Gastrocnemius medialis (tissue), 4 donors: ENCODE measurements at regions of chr7 and their contacts with region 1.

Region 1: GRCh38 chr7:155598810-155599210 is 45.7 kb upstream of the RBM33 start:
- DNase-seq: peak; percentile 27 to 60
- ATAC-seq: peak; percentile 70 to 79
- H3K4me3 ChIP-seq: no peak overlapping the region
- H3K27ac ChIP-seq: no peak overlapping the region
- H3K4me1 ChIP-seq: no peaks in the 10 kb centered on the region
- H3K27me3 ChIP-seq: peaks cover 0 to 7% (median 0%) of the 10 kb centered on the region in 3 donors
- CTCF ChIP-seq: peak; percentile 82 to 96 (median 87)
- POLR2A ChIP-seq: no peak

Region 2: GRCh38 chr7:155644178-155644970 is 45.6 kb after region 1 on chr7 and contains the start of gene RBM33:
- in situ Hi-C with region 1: no loop called
- intact Hi-C with region 1: no loop called
- DNase-seq: peak; percentile 62 to 70
- ATAC-seq: peak; percentile 92
- H3K4me3 ChIP-seq: peak within 1 kb of the TSS; percentile 83 to 99 (median 90)
- H3K27ac ChIP-seq: peak within 1 kb of the TSS; percentile 93 to 98 (median 96)
- H3K4me1 ChIP-seq: peaks cover 29% of the 10 kb centered on the region in 2 donors
- H3K27me3 ChIP-seq: no peaks in the 10 kb centered on the region
- CTCF ChIP-seq: no peak
- POLR2A ChIP-seq: peak; percentile 48 to 55
- total RNA-seq, gene RBM33: 16.6 to 30.0 (median 28.1) TPM

Region 3: GRCh38 chr7:155738652-155739537 is 140.1 kb after region 1 on chr7:
- in situ Hi-C with region 1: no loop called
- intact Hi-C with region 1: loop called (anchors 1 kb)
- DNase-seq: peak; percentile 32 to 67
- ATAC-seq: peak; percentile 67 to 89
- H3K4me3 ChIP-seq: no peak overlapping the region
- H3K27ac ChIP-seq: no peak overlapping the region
- H3K4me1 ChIP-seq: peaks cover 7 to 11% of the 10 kb centered on the region in 2 donors
- H3K27me3 ChIP-seq: no peaks in the 10 kb centered on the region
- CTCF ChIP-seq: peak; percentile 35 to 63 (median 51)
- POLR2A ChIP-seq: no peak

Region 4: DNA sequence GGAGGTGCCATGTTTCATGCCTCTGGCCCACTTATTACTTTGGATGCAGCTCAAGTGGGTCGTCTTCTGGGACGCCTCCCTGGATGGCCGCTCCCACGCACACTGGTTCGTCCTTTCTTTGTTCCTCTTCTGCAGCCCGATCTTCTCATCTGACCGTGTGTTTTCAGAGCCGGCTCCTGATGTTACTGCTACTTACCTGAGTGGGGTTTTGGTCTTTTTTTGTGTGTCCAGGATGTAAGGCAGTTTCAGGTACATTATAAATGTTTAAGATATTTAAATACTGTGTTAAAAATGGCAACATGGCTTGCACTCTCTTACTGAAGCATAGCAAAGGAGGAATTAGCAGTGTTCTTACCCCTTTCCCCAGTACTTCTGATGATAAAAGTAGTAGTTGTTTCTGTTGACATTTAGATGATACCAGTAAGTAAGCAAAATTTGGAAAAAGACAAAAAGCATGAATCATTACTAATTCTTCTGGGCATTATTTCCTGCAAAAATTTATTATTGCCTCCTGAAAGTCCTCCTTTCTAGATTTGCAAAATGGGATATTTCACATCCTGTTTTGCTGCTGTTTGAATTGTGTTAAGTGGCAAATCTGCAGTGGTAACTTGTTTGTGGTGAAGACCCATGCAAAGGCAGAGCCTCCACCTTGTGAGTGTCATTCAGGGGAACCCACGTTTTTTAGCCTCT is 154.1 kb after region 1 on chr7:
- in situ Hi-C with region 1: loop called in 1 of 4 experiments (anchors 10 kb)
- intact Hi-C with region 1: no loop called
- DNase-seq: no peak
- ATAC-seq: no peak
- H3K4me3 ChIP-seq: no peak overlapping the region
- H3K27ac ChIP-seq: no peak overlapping the region
- H3K4me1 ChIP-seq: peaks cover 59 to 64% of the 10 kb centered on the region in 2 donors
- H3K27me3 ChIP-seq: no peaks in the 10 kb centered on the region
- CTCF ChIP-seq: no peak
- POLR2A ChIP-seq: no peak

Region 5: DNA sequence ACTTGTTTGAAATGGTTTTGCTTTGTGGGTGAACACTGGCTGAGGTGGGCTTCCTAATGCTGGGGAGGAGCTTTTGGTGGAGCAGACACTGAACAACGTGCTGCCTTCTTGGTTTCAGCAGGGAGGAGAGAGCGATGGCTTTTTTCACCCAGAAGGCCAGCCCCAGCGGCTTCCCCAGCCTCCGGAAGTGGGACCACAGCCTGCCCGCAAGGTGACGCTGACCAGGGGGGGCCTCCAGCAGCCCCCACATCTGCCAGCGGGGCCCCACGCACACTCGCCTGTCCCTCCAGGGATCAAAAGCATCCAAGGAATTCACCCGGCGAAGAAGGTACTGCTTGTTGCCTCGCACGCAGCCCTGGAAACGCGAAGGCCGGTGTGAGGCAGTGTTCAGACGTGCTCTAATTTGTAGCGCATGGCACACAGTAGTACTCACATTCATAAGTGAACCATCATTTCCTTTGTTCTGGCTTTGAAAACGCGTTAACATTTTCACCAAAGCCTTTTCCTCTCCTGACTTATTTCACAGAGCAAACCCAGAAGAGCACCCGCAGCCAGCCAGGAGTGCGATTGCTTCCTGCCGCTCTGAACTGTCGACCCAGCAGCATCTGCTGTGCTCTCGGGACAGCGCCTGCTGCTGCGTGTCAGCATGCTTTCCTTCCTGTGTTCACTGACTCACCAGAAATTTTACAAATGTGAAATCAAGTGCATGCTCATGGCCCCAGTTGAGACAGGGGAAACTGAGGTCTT is 165.1 kb after region 1 on chr7:
- in situ Hi-C with region 1: loop called (anchors 5 to 10 kb)
- intact Hi-C with region 1: loop called (anchors 1 kb)
- DNase-seq: no peak
- ATAC-seq: peak in 1 of 2 donors; percentile 11
- H3K4me3 ChIP-seq: no peak overlapping the region
- H3K27ac ChIP-seq: peak overlapping the region; percentile 20 to 52 (median 48)
- H3K4me1 ChIP-seq: peaks cover 19 to 28% of the 10 kb centered on the region in 2 donors
- H3K27me3 ChIP-seq: no peaks in the 10 kb centered on the region
- CTCF ChIP-seq: no peak
- POLR2A ChIP-seq: no peak

Region 6: GRCh38 chr7:155769701-155770100 is 170.9 kb after region 1 on chr7:
- in situ Hi-C with region 1: loop called in 3 of 4 experiments (anchors 5 kb)
- intact Hi-C with region 1: loop called (anchors 1 kb)
- DNase-seq: no peak
- ATAC-seq: no peak
- H3K4me3 ChIP-seq: no peak overlapping the region
- H3K27ac ChIP-seq: no peak overlapping the region
- H3K4me1 ChIP-seq: no peaks in the 10 kb centered on the region
- H3K27me3 ChIP-seq: no peaks in the 10 kb centered on the region
- CTCF ChIP-seq: no peak
- POLR2A ChIP-seq: no peak